ENCODE measurements at regions of chr15 and their contacts with region 1.

Region 1: DNA sequence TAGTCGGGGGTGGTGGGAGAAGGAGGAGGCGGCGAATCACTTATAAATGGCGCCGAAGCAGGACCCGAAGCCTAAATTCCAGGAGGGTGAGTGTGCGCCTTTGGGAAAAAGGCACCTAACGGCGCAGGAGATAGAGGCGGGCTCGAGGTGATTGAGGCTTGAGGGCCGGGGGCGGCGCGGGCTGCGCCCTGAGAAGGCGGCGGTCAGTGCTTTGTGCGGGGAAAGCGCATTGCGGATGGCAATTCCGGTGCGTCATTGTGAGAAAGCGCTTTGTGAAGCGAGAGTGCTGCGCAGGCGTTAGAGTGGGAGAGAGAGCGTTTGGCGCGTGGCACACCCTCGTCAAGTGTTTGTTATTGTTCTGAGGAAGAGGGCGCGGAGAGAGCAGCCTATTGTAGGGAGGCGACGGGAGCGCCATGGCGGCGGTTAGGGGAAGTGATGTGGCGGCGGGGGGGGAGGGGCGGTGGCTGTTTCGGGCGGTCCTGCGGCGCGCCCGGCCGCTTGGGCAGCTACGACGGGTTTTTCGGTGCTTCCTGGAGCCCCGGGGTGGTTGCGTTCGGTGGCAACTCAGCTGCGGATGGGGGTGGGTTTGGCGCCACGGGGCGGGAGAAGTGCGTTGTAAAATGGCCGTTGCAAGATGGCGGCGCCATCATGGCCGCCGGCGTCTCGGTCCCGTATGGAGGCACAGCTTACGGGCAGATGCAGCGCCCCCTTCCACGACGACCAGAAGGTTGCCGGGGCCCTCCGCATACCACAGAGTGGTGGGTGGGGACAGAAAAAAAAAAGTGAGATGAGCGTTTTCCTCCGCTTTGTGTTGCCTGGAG is 492 bp downstream of the MORF4L1 start:
- DNase-seq: peak; percentile 77 to 97 (median 86)
- ATAC-seq: peak; percentile 70
- H3K4me3 ChIP-seq: peak overlapping the region; percentile 98
- H3K4me3 Mint-ChIP-seq: peak overlapping the region; percentile 100
- H3K27ac ChIP-seq: peak overlapping the region; percentile 100
- H3K27ac Mint-ChIP-seq: peak overlapping the region; percentile 100
- H3K4me1 ChIP-seq: peaks cover 35% of the 10 kb centered on the region
- H3K4me1 Mint-ChIP-seq: peaks cover 49% of the 10 kb centered on the region
- H3K27me3 ChIP-seq: no peaks in the 10 kb centered on the region
- H3K27me3 Mint-ChIP-seq: no peaks in the 10 kb centered on the region
- CTCF ChIP-seq: peak; percentile 64

Region 2: DNA sequence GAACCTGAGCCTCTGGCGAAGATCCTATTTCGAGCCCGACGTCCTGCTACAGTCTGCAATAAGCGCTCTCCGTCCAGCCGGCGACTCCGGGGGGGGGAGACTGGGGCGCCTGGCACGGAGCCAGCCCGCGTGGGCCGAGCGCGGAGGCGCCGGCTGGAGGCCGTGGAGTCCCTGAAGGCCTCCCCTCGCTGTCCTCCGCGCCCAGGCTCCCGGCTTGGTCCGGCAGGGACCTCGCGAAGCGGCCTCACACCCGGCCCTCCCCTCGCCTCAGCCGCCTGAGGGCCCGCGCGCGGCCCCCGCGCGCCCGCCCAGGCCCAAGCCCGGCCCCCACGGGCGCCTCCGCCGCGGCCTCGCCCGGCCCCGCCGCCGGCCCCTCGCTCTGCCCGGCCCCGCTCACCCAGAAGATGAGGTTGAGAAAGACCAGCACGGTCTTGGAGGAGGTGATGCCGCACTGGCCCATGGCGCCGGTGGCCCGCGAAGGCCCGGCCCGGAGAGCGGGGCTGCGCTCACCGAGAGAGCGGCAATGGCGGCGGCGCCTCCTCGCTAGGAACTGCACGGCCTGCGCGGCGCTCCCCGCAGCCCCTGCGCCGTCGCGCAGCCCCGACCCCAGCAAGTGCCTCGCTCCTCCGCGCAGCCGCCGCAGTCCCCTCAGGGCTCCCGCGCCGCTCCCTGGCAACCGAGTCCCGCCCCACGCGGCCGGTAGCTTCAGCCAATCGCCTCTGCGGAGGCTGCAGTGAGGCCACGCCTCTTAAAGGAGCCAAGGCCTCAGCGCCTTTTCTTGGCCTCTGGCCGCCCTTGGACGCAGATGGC is 1802.5 kb before region 1 on chr15 and contains the start of gene TSPAN3:
- CTCF ChIA-PET with region 1: no interaction called
- POLR2A ChIA-PET with region 1: no interaction called
- intact Hi-C with region 1: loop called in 1 of 2 experiments (anchors 10 kb)
- DNase-seq: peak; percentile 85 to 95 (median 92)
- ATAC-seq: peak; percentile 99
- H3K4me3 ChIP-seq: peak within 1 kb of the TSS; percentile 60
- H3K4me3 Mint-ChIP-seq: peak within 1 kb of the TSS; percentile 97
- H3K27ac ChIP-seq: no peak within 1 kb of the TSS
- H3K27ac Mint-ChIP-seq: peak within 1 kb of the TSS; percentile 85
- H3K4me1 ChIP-seq: peaks cover 18% of the 10 kb centered on the region
- H3K4me1 Mint-ChIP-seq: peaks cover 37% of the 10 kb centered on the region
- H3K27me3 ChIP-seq: no peaks in the 10 kb centered on the region
- H3K27me3 Mint-ChIP-seq: peaks cover 3% of the 10 kb centered on the region
- CTCF ChIP-seq: no peak
- total RNA-seq, gene TSPAN3: 14.7 to 15.5 TPM

Region 3: GRCh38 chr15:78540141-78540928 is 332.8 kb before region 1 on chr15 and contains the start of gene PSMA4:
- CTCF ChIA-PET with region 1: no interaction called
- POLR2A ChIA-PET with region 1: interaction called, 14 read pairs
- intact Hi-C with region 1: no loop called
- DNase-seq: peak; percentile 87 to 96 (median 93)
- ATAC-seq: peak; percentile 84
- H3K4me3 ChIP-seq: peak within 1 kb of the TSS; percentile 77
- H3K4me3 Mint-ChIP-seq: peak within 1 kb of the TSS; percentile 93
- H3K27ac ChIP-seq: peak within 1 kb of the TSS; percentile 92 to 97
- H3K27ac Mint-ChIP-seq: peak within 1 kb of the TSS; percentile 99
- H3K4me1 ChIP-seq: peaks cover 30% of the 10 kb centered on the region
- H3K4me1 Mint-ChIP-seq: peaks cover 33% of the 10 kb centered on the region
- H3K27me3 ChIP-seq: no peaks in the 10 kb centered on the region
- H3K27me3 Mint-ChIP-seq: no peaks in the 10 kb centered on the region
- CTCF ChIP-seq: no peak
- total RNA-seq, gene PSMA4: 65.5 to 66.4 TPM

Region 4: GRCh38 chr15:78761891-78762385 is 111.2 kb before region 1 on chr15:
- CTCF ChIA-PET with region 1: no interaction called
- POLR2A ChIA-PET with region 1: interaction called, 13 read pairs
- intact Hi-C with region 1: loop called (anchors 5 to 10 kb)
- DNase-seq: no peak
- ATAC-seq: no peak
- H3K4me3 ChIP-seq: peak overlapping the region; percentile 32
- H3K4me3 Mint-ChIP-seq: peak overlapping the region; percentile 56
- H3K27ac ChIP-seq: peak overlapping the region; percentile 57 to 58
- H3K27ac Mint-ChIP-seq: peak overlapping the region; percentile 86
- H3K4me1 ChIP-seq: peaks cover 33% of the 10 kb centered on the region
- H3K4me1 Mint-ChIP-seq: peaks cover 22% of the 10 kb centered on the region
- H3K27me3 ChIP-seq: no peaks in the 10 kb centered on the region
- H3K27me3 Mint-ChIP-seq: no peaks in the 10 kb centered on the region
- CTCF ChIP-seq: no peak

Region 5: GRCh38 chr15:78889000-78889399 is 15.8 kb after region 1 on chr15:
- CTCF ChIA-PET with region 1: interaction called, 7 read pairs
- POLR2A ChIA-PET with region 1: interaction called, 17 read pairs
- intact Hi-C with region 1: loop called in 1 of 2 experiments (anchors 1 kb)
- DNase-seq: no peak
- ATAC-seq: no peak
- H3K4me3 ChIP-seq: no peak overlapping the region
- H3K4me3 Mint-ChIP-seq: no peak overlapping the region
- H3K27ac ChIP-seq: no peak overlapping the region
- H3K27ac Mint-ChIP-seq: no peak overlapping the region
- H3K4me1 ChIP-seq: peaks cover 6% of the 10 kb centered on the region
- H3K4me1 Mint-ChIP-seq: peaks cover 39% of the 10 kb centered on the region
- H3K27me3 ChIP-seq: no peaks in the 10 kb centered on the region
- H3K27me3 Mint-ChIP-seq: no peaks in the 10 kb centered on the region
- CTCF ChIP-seq: no peak

Measured in CD4-positive, alpha-beta T cell (primary cell).